ENCODE measurements at regions of chr10 and their contacts with region 1.

Region 1: DNA sequence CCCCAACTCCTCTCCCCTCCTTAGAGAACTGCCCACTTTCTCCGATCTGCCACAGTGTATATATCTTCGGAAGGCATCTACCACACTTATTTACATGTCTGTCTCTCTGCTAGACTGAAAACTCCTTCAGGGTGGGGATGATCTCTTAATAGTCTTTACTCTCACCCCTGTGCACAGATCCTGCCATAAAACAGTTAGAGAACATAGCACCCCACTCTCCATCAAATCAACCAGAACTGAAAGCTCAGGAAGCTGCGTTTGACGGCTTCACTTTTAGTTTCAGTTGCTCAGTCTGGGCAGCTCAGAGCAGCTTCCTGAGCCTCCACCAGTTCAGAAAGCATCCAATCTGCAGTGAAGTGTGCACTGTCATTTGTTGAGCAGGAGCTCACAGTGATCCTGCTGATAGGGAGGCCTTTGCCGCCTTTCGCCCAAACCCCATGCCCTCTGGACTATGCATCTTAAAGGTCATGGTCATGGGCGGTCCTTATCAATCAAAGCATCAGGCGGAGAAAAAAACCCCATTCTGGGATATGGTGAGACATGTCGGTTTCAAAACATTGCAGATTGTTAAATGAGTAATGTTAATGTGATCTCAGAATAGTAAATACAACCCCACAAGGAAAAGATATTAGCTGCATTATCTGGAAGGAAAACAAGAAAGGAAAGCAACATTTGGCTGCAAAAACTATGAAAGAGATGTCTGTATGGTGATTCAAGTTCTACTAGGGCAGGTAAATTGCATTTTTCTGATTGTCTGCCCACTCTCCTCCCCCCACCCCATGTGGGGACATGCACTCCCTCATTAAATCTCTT is 167.1 kb upstream of the ADO start:
- DNase-seq: peak; percentile 82 to 84 (median 82)
- H3K4me3 ChIP-seq: peak overlapping the region; percentile 9 to 66 (median 38)
- H3K4me3 Mint-ChIP-seq: no peak overlapping the region
- H3K27ac ChIP-seq: peak overlapping the region; percentile 95 to 99
- H3K27ac Mint-ChIP-seq: no peak overlapping the region
- H3K4me1 ChIP-seq: peaks cover 81 to 84% of the 10 kb centered on the region in 2 donors
- H3K4me1 Mint-ChIP-seq: no peaks in the 10 kb centered on the region
- H3K27me3 ChIP-seq: no peaks in the 10 kb centered on the region
- H3K27me3 Mint-ChIP-seq: peaks cover 0 to 6% (median 0%) of the 10 kb centered on the region in 3 donors
- CTCF ChIP-seq: no peak

Region 2: GRCh38 chr10:62399211-62399610 is 238.2 kb before region 1 on chr10:
- intact Hi-C with region 1: no loop called
- DNase-seq: no peak
- H3K4me3 ChIP-seq: no peak overlapping the region
- H3K4me3 Mint-ChIP-seq: no peak overlapping the region
- H3K27ac ChIP-seq: no peak overlapping the region
- H3K27ac Mint-ChIP-seq: no peak overlapping the region
- H3K4me1 ChIP-seq: no peaks in the 10 kb centered on the region
- H3K4me1 Mint-ChIP-seq: no peaks in the 10 kb centered on the region
- H3K27me3 ChIP-seq: no peaks in the 10 kb centered on the region
- H3K27me3 Mint-ChIP-seq: peaks cover 0 to 5% (median 0%) of the 10 kb centered on the region in 3 donors
- CTCF ChIP-seq: no peak

Region 3: DNA sequence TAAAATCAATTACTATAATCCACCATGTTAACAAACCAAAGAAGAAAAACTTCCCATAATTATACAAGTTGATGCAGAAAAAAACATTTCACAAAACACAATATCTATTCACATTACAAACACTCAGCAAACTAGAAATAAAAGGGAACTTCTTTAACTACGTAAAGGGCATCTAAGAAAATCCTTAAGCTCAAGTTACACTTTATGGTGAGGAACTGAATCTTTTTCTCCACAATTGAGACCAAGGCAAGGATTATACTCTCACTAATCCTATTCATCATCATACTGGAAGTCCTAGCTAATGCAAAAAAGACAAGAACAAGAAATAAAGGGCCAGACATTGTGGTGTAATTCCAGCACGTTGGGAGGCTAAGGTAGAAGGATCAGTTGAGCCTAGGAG is 103.4 kb before region 1 on chr10:
- intact Hi-C with region 1: no loop called
- DNase-seq: peak in 1 of 3 donors; percentile 18
- H3K4me3 ChIP-seq: no peak overlapping the region
- H3K4me3 Mint-ChIP-seq: no peak overlapping the region
- H3K27ac ChIP-seq: peak overlapping the region; percentile 14 to 40
- H3K27ac Mint-ChIP-seq: peak overlapping the region in 6 of 7 donors; percentile 29 to 81 (median 52)
- H3K4me1 ChIP-seq: peaks cover 25 to 32% of the 10 kb centered on the region in 2 donors
- H3K4me1 Mint-ChIP-seq: peaks cover 26% of the 10 kb centered on the region
- H3K27me3 ChIP-seq: no peaks in the 10 kb centered on the region
- H3K27me3 Mint-ChIP-seq: peaks cover 0 to 8% (median 1%) of the 10 kb centered on the region in 3 donors
- CTCF ChIP-seq: no peak

Region 4: DNA sequence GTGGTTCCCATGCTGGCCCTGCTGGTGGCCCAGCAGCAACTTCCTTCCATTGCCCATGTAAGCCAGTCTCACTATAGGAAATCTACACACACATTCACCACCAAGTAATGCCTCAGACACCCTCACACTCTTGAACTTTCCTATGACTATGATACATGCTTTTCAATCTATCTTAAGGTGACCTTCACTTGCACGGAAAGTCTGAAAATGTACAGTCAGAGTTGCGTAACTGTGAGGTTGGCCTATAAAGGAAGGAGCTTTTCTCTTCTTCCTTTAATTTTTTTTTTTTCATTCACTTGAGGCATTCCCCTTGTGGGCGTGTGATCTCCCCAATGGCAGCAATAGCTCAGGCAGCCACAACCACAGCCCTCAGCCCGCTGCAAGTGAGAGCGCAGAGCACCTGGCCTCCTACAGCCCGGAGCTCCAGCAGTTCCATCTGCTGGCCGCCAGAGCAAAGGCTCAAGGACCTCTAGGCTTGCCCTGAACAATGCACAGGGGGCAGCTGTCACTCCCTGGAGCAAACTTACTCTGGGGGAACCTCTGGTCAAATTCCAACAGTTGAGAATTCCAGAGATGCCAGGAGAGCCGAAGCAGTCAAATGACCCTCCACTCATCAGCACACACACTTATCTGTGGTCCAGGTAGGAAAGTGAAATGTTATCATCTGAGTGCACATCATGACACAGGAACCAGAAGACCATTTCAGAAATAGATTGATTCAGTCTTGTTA is 43.9 kb after region 1 on chr10:
- intact Hi-C with region 1: loop called in 1 of 2 experiments (anchors 5 kb)
- DNase-seq: peak; percentile 85 to 99 (median 94)
- H3K4me3 ChIP-seq: peak overlapping the region in 1 of 3 experiments; percentile 1
- H3K4me3 Mint-ChIP-seq: peak overlapping the region in 1 of 2 donors; percentile 20
- H3K27ac ChIP-seq: peak overlapping the region; percentile 21 to 62
- H3K27ac Mint-ChIP-seq: peak overlapping the region; percentile 30 to 88 (median 53)
- H3K4me1 ChIP-seq: peaks cover 16 to 18% of the 10 kb centered on the region in 2 donors
- H3K4me1 Mint-ChIP-seq: peaks cover 26% of the 10 kb centered on the region
- H3K27me3 ChIP-seq: no peaks in the 10 kb centered on the region
- H3K27me3 Mint-ChIP-seq: no peaks in the 10 kb centered on the region
- CTCF ChIP-seq: peak; percentile 26

Measured in CD14-positive monocyte (primary cell).